Sciatic nerve (tissue), 2 donors: ENCODE measurements at regions of chr20 and their contacts with region 1.

Region 1: DNA sequence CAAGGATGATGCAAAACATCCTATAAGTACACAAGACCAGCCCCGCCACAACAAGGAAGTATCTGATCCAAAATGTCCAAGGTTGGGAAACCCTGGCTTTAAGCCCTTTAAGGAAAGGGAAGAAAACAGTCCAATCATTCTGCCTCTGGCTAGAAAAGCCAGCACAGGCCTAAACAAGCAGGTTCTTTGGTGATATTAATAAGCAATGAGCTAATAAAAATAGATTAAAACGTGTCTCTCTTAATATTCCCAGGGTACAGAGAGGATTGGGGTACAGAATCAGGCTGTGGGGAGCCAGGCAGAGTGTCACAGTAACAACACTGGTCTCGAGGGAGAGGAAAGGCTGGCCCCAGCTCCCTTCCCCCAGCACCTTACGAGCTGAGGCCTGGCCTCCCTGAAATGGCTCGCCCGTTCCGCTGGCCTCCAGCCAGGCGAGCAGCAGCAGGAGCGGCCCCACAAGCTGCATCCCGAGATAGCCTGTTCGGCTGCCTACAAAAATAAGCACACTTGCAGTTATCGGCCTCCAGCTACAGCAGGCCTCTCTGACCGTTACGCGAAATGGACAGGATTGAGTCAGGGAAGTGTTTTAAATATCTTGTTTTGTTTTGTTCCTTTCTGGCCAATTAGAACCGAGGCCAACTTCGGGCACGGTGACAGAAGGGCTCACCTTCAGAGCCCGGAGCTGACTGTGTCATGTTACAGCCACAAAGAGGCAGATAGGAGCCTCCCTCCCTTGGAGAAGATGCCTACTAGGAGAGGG is 4.0 kb upstream of the ZMYND8 start:
- DNase-seq: peak; percentile 85
- ATAC-seq: peak; percentile 62

Region 2: DNA sequence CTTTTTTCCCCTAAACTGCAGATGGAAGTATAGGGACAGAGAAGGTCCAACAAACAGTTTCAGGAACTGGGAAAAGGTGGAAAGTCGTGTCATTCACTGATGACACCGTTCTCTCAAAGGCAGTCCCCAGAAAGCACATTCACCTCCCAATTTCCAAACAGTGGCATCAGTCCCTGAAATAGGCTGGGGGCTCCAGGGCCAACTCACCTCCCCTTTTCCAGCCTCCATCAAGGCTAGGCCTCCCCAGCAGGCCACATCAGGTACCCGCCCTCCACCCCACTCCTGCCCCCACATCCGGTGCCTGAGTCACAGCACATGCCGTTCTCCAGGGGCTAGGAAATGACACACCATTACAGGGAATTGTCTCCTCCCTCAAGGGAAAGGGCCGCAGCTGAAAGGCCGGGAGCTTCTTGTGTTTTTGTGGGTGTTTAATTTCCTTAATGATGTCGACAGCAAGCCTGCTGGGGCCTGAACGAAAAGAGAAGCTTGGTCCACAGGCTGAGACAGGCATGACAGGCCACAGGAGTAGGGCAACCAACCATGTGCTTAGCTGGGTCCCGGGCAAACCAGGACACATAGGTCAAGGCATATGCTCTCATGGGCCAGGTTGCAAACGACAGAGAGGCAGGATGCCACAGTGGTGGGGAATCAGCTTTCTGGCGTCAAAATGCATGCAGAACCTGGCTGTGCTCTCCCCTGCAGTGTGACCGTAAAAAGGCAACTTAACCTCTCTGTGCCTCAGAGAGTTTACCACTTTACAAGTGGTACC is 43.2 kb before region 1 on chr20:
- intact Hi-C with region 1: loop called (anchors 5 kb)
- DNase-seq: peak; percentile 69
- ATAC-seq: peak; percentile 48

Region 3: DNA sequence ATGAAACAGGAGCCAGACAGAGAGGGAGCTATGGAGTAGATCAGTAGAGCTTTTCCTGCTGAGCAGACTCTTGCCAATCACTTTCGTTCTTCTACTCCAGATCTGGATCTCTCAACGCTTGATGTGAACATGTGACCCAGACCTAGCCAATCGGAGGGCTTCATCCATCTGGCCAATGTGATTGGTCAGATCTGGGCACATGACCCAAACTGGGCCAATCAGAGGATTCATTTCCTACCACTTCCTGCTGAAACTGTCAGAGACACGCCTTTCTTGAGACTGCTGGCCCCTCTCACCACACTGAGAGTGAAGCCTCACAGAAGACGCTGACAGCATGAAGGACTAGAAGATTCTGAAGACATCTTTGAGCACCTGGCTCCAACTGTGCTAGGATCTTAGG is 40.2 kb after region 1 on chr20:
- intact Hi-C with region 1: no loop called
- DNase-seq: no peak
- ATAC-seq: no peak